Activated CD4-positive, alpha-beta T cell treated with anti-CD3 and anti-CD28 coated beads for 36 hours (primary cell): ENCODE measurements at regions of chr14 and their contacts with region 1.

Region 1: DNA sequence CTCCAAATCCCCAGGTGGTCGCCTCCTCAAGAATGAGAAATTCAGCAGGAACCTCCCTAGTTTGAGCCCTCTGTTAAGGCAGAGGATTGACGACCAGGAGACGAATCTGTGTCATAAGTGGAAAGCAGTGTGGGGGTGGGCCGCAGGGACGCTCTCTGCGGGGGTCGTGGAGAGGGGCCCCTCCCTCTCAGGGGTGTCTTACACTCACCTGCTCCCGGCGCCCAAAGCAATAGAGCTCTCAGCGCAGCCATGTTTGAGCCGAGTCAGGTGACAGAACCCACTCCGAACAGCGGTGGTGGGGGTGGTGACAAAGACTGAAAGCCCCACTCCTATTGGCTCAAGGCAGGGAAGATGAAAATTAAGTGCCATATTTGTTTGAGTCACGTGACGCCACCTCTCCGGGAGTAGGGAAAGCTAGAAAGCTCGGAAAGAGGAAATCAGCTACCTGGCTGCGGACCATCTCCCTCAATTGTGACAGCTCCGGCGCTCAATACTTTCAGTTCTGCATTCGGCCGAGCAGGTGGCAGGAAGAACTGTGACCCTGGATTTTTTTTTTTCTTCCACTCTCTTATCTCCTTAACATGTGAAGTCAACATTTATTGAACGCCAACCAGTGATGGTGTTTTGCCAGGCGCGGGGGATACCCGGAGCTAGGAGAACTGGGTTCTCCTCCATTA is at the start of gene ZFYVE26:
- DNase-seq: peak; percentile 95
- ATAC-seq: peak; percentile 89
- H3K4me3 Mint-ChIP-seq: peak within 1 kb of the TSS; percentile 89
- H3K27ac Mint-ChIP-seq: peak within 1 kb of the TSS; percentile 92
- H3K4me1 Mint-ChIP-seq: peaks cover 45% of the 10 kb centered on the region
- H3K27me3 Mint-ChIP-seq: no peaks in the 10 kb centered on the region
- total RNA-seq, gene ZFYVE26: 13.0 to 14.2 TPM

Region 2: DNA sequence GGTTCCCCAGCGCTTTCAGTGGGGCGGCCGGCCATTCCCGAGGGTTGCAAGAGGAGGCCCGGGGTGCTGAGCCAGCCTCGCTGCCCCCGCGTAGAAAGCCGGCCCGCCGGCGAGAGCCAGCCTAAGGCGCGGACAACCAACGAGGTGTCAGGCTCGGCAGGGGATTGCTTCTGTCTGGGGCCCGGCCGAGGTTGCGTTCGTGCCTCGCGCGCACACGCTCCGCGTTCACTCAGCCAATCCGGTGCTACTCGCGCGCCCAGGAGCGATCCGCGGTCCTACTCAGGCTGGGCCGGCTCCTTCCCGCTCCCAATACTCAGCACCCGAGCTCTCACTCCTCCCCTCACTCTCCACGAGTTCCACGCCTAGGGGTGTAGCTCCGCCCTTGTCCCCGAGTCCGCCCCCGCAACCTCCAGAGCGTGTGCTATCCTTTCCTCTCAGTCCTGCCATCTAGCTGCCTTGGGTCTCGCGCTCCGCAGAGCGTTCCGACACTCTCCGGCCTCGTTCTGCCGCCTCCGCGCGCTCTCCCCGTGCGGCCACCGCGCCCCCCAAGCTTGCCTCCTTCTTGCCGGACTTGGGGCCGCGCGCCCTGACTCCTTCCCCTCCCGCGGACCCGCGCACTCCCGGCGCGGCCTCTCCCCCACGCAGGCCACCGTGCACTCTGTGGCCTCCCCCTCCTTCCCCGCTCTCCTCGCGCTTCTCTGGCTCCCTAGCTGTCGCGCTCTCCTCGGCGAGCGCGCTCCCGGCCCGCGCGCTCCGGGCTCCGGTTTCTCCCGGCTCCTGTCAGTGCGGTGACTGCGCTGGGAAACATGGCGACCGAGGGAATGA is 1308.5 kb before region 1 on chr14 and contains the start of gene GPHN:
- CTCF ChIA-PET with region 1: no interaction called
- POLR2A ChIA-PET with region 1: no interaction called
- intact Hi-C with region 1: loop called in 1 of 2 experiments (anchors 5 kb)
- DNase-seq: peak; percentile 96
- ATAC-seq: peak; percentile 96
- H3K4me3 Mint-ChIP-seq: peak within 1 kb of the TSS; percentile 90
- H3K27ac Mint-ChIP-seq: peak within 1 kb of the TSS; percentile 94
- H3K4me1 Mint-ChIP-seq: peaks cover 39% of the 10 kb centered on the region
- H3K27me3 Mint-ChIP-seq: peaks cover 3% of the 10 kb centered on the region
- total RNA-seq, gene GPHN: 29.8 to 37.5 TPM

Region 3: GRCh38 chr14:67674481-67675169 is 141.8 kb before region 1 on chr14 and contains the start of gene VTI1B:
- CTCF ChIA-PET with region 1: no interaction called
- POLR2A ChIA-PET with region 1: no interaction called
- intact Hi-C with region 1: loop called in 1 of 2 experiments (anchors 1 kb)
- DNase-seq: peak; percentile 83
- ATAC-seq: peak; percentile 94
- H3K4me3 Mint-ChIP-seq: peak within 1 kb of the TSS; percentile 81
- H3K27ac Mint-ChIP-seq: peak within 1 kb of the TSS; percentile 82
- H3K4me1 Mint-ChIP-seq: peaks cover 32% of the 10 kb centered on the region
- H3K27me3 Mint-ChIP-seq: no peaks in the 10 kb centered on the region
- total RNA-seq, gene VTI1B: 42.0 to 58.3 TPM

Region 4: GRCh38 chr14:67787673-67788072 is 28.8 kb before region 1 on chr14:
- CTCF ChIA-PET with region 1: no interaction called
- POLR2A ChIA-PET with region 1: no interaction called
- intact Hi-C with region 1: no loop called
- DNase-seq: no peak
- ATAC-seq: no peak
- H3K4me3 Mint-ChIP-seq: no peak overlapping the region
- H3K27ac Mint-ChIP-seq: no peak overlapping the region
- H3K4me1 Mint-ChIP-seq: no peaks in the 10 kb centered on the region
- H3K27me3 Mint-ChIP-seq: no peaks in the 10 kb centered on the region

Region 5: DNA sequence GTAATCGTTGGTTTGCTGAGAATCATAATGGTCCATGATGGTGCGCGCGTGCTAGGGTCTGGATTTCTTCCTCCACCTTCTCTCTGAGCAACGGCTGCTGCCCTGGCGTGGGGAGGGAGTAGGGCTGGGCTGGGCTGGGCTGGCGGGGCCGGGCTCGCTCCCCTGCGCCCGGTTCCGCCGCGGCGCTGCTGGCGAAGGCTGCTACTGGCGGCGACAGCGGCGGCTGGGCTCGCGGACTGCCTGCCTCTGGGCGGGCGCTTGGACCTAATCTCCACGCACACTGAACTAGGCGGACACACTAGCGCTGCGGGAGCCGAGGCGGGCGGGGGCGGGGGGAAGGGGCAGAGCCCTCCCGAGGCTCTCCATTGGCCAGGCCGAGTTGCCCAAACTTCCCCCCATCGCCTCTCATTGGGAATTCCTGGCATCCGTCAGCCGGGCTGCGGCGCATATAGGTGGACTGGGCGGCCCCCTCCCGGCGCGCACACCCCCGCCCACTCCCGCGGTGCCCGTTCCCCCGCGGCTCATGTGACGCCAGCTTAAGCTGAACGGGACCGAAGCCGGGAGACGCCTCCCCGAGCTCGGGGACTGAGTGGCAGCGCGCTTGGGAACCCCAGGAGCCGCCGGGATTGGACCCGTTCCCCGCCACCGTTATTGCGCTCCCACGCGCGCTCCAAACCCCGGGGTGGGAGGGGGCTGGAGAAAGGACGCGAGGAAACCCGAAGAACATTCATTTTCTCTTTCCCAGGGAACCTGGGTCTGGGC is 1162.7 kb after region 1 on chr14 and contains the start of gene ACTN1:
- CTCF ChIA-PET with region 1: no interaction called
- POLR2A ChIA-PET with region 1: no interaction called
- intact Hi-C with region 1: loop called in 1 of 2 experiments (anchors 5 kb)
- DNase-seq: peak; percentile 84
- ATAC-seq: peak; percentile 72
- H3K4me3 Mint-ChIP-seq: peak within 1 kb of the TSS; percentile 79
- H3K27ac Mint-ChIP-seq: peak within 1 kb of the TSS; percentile 88
- H3K4me1 Mint-ChIP-seq: peaks cover 38% of the 10 kb centered on the region
- H3K27me3 Mint-ChIP-seq: peaks cover 2% of the 10 kb centered on the region
- total RNA-seq, gene ACTN1: 92.8 to 146 TPM

Region 6: DNA sequence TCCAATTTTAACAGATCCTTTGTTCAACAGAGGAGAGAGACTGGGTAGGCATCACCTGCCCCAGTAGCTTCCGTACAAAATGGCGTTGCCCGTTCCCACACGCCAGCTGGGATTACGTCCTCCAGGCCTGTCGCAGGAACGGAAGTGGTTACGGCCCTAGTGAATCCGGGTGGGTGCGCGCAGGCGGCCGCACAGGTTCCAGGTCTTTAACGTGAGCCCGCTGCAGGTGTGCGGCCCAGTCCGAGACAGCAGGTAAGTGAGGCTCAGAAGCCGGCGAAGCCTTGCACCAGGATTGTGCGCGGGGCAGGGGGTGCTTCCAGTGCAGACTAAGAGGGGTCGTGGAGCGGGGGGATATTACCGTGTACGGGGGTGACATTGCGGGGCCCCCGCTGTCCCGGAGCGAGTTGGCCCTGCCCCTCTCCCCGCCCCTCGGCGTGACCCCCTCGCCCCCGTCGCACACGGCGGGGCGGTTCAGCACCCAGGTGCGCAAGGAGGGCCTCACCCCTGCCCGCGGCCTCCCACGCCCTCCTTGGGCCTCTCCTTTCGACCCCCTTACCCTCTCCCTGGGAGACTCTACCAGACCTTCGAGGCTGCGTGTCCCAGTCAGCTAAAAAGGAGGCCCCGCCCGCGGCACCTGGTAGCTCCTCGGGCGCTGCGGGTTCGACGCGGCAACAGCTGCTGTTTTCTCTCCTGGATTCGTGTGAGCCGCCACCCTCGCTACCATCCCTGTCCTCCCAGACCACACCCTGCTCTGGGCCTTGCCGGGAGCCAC is 1375.1 kb after region 1 on chr14 and contains the start of gene EXD2:
- CTCF ChIA-PET with region 1: no interaction called
- POLR2A ChIA-PET with region 1: no interaction called
- intact Hi-C with region 1: loop called in 1 of 2 experiments (anchors 5 kb)
- DNase-seq: peak; percentile 90
- ATAC-seq: peak; percentile 93
- H3K4me3 Mint-ChIP-seq: peak within 1 kb of the TSS; percentile 92
- H3K27ac Mint-ChIP-seq: peak within 1 kb of the TSS; percentile 91
- H3K4me1 Mint-ChIP-seq: peaks cover 25% of the 10 kb centered on the region
- H3K27me3 Mint-ChIP-seq: no peaks in the 10 kb centered on the region
- total RNA-seq, gene EXD2: 10.8 to 14.5 TPM